CD4-positive, alpha-beta memory T cell (primary cell): ENCODE measurements at regions of chr3 and their contacts with region 1.

Region 1: GRCh38 chr3:42804106-42804830 is at the start of gene HIGD1A:
- DNase-seq: peak; percentile 90 to 92 (median 91)
- H3K4me3 ChIP-seq: peak within 1 kb of the TSS; percentile 86 to 88
- H3K4me3 Mint-ChIP-seq: peak within 1 kb of the TSS; percentile 94 to 98 (median 96)
- H3K27ac ChIP-seq: peak within 1 kb of the TSS; percentile 81
- H3K27ac Mint-ChIP-seq: peak within 1 kb of the TSS; percentile 91 to 99 (median 96)
- H3K4me1 ChIP-seq: peaks cover 38% of the 10 kb centered on the region
- H3K4me1 Mint-ChIP-seq: peaks cover 24 to 57% (median 37%) of the 10 kb centered on the region in 4 donors
- H3K27me3 ChIP-seq: no peaks in the 10 kb centered on the region
- H3K27me3 Mint-ChIP-seq: peaks cover 6% of the 10 kb centered on the region in 2 donors
- total RNA-seq, gene HIGD1A: 24.3 to 26.7 TPM

Region 2: GRCh38 chr3:42772670-42773408 is 31.4 kb before region 1 on chr3 and contains the start of gene CCDC13:
- CTCF ChIA-PET with region 1: no interaction called
- POLR2A ChIA-PET with region 1: no interaction called
- intact Hi-C with region 1: loop called (anchors 1 kb)
- DNase-seq: peak; percentile 78 to 86 (median 80)
- H3K4me3 ChIP-seq: peak within 1 kb of the TSS; percentile 31 to 73
- H3K4me3 Mint-ChIP-seq: peak within 1 kb of the TSS; percentile 82 to 95 (median 91)
- H3K27ac ChIP-seq: peak within 1 kb of the TSS; percentile 19
- H3K27ac Mint-ChIP-seq: peak within 1 kb of the TSS; percentile 83 to 98 (median 94)
- H3K4me1 ChIP-seq: peaks cover 13% of the 10 kb centered on the region
- H3K4me1 Mint-ChIP-seq: peaks cover 5 to 16% (median 10%) of the 10 kb centered on the region in 4 donors
- H3K27me3 ChIP-seq: no peaks in the 10 kb centered on the region
- H3K27me3 Mint-ChIP-seq: no peaks in the 10 kb centered on the region
- total RNA-seq, gene CCDC13: 0.72 to 0.96 TPM

Region 3: GRCh38 chr3:42831321-42831713 is 27.0 kb after region 1 on chr3:
- CTCF ChIA-PET with region 1: no interaction called
- POLR2A ChIA-PET with region 1: no interaction called
- intact Hi-C with region 1: loop called (anchors 1 kb)
- DNase-seq: peak; percentile 64 to 70 (median 65)
- H3K4me3 ChIP-seq: no peak overlapping the region
- H3K4me3 Mint-ChIP-seq: no peak overlapping the region
- H3K27ac ChIP-seq: no peak overlapping the region
- H3K27ac Mint-ChIP-seq: no peak overlapping the region
- H3K4me1 ChIP-seq: no peaks in the 10 kb centered on the region
- H3K4me1 Mint-ChIP-seq: peaks cover 0 to 6% (median 2%) of the 10 kb centered on the region in 4 donors
- H3K27me3 ChIP-seq: no peaks in the 10 kb centered on the region
- H3K27me3 Mint-ChIP-seq: peaks cover 13 to 26% of the 10 kb centered on the region in 2 donors

Region 4: DNA sequence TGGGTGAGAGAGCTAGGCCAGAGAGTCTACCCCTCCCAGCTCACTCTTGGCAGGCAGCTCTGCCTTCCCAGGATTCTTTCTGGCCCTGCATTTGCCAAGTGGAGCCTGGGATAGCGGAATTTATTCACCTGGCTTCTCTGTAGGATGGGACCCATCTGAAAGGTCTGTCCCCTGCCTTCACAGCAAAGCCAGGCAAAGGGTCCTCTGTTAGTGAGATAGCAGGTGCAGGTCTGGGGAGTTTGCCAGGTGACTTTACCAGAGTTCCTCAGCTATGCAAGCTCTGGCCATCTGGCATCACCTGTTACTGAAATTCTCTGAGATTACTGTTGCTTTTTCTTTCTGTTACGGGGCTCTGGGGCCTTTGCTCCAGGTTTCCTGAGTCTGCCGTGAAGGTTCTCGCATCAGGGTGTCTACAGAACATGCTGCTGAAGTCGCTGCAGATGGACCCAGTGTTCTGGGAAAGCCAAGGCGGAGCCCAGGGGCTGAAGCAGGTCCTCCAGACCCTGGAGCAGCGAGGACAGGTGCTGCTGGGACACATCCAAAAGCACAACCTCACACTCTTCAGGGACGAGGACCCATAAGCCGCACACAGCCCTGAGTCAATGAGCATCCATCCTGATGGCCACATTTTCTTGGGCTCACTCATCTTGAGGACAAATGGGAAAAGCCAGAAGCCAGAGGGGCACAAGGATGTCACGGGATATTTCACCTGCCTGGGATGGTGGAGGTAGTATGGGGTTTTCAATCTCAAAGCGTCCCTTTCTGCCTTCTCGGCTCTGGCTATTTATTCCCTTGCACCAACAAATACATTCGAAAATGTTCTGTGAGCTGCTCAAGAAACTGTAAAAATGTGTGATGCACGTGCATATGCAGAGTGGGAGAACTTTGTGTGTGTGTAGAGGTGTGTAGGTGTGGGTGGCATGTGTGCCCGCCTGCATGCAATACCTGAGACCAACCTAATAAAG is 251.8 kb after region 1 on chr3:
- CTCF ChIA-PET with region 1: no interaction called
- POLR2A ChIA-PET with region 1: no interaction called
- intact Hi-C with region 1: no loop called
- DNase-seq: no peak
- H3K4me3 ChIP-seq: no peak overlapping the region
- H3K4me3 Mint-ChIP-seq: no peak overlapping the region
- H3K27ac ChIP-seq: no peak overlapping the region
- H3K27ac Mint-ChIP-seq: no peak overlapping the region
- H3K4me1 ChIP-seq: peaks cover 9% of the 10 kb centered on the region
- H3K4me1 Mint-ChIP-seq: peaks cover 0 to 10% (median 8%) of the 10 kb centered on the region in 4 donors
- H3K27me3 ChIP-seq: no peaks in the 10 kb centered on the region
- H3K27me3 Mint-ChIP-seq: peaks cover 1% of the 10 kb centered on the region in 2 donors

Region 5: GRCh38 chr3:43273416-43273815 is 469.1 kb after region 1 on chr3:
- CTCF ChIA-PET with region 1: no interaction called
- POLR2A ChIA-PET with region 1: no interaction called
- intact Hi-C with region 1: no loop called
- DNase-seq: no peak
- H3K4me3 ChIP-seq: no peak overlapping the region
- H3K4me3 Mint-ChIP-seq: no peak overlapping the region
- H3K27ac ChIP-seq: no peak overlapping the region
- H3K27ac Mint-ChIP-seq: no peak overlapping the region
- H3K4me1 ChIP-seq: no peaks in the 10 kb centered on the region
- H3K4me1 Mint-ChIP-seq: peaks cover 0 to 2% (median 0%) of the 10 kb centered on the region in 4 donors
- H3K27me3 ChIP-seq: no peaks in the 10 kb centered on the region
- H3K27me3 Mint-ChIP-seq: peaks cover 0 to 3% of the 10 kb centered on the region in 2 donors